ENCODE measurements at regions of chr9 and their contacts with region 1.

Region 1: GRCh38 chr9:136558373-136558772 is 12.5 kb upstream of the NOTCH1 start:
- DNase-seq: peak; percentile 65
- H3K4me3 Mint-ChIP-seq: no peak overlapping the region
- H3K27ac Mint-ChIP-seq: peak overlapping the region; percentile 2
- H3K4me1 Mint-ChIP-seq: peaks cover 11% of the 10 kb centered on the region
- H3K27me3 Mint-ChIP-seq: no peaks in the 10 kb centered on the region
- CTCF ChIP-seq: no peak

Region 2: GRCh38 chr9:136545966-136546698 is 12.2 kb before region 1 on chr9 and contains the start of gene NOTCH1:
- CTCF ChIA-PET with region 1: interaction called, 5 read pairs
- POLR2A ChIA-PET with region 1: interaction called, 30 read pairs
- intact Hi-C with region 1: no loop called
- DNase-seq: peak; percentile 94
- H3K4me3 Mint-ChIP-seq: peak within 1 kb of the TSS; percentile 76
- H3K27ac Mint-ChIP-seq: peak within 1 kb of the TSS; percentile 59
- H3K4me1 Mint-ChIP-seq: peaks cover 10% of the 10 kb centered on the region
- H3K27me3 Mint-ChIP-seq: no peaks in the 10 kb centered on the region
- CTCF ChIP-seq: no peak
- total RNA-seq, gene NOTCH1: 37.5 and 53.4 TPM in 2 replicates

Region 3: DNA sequence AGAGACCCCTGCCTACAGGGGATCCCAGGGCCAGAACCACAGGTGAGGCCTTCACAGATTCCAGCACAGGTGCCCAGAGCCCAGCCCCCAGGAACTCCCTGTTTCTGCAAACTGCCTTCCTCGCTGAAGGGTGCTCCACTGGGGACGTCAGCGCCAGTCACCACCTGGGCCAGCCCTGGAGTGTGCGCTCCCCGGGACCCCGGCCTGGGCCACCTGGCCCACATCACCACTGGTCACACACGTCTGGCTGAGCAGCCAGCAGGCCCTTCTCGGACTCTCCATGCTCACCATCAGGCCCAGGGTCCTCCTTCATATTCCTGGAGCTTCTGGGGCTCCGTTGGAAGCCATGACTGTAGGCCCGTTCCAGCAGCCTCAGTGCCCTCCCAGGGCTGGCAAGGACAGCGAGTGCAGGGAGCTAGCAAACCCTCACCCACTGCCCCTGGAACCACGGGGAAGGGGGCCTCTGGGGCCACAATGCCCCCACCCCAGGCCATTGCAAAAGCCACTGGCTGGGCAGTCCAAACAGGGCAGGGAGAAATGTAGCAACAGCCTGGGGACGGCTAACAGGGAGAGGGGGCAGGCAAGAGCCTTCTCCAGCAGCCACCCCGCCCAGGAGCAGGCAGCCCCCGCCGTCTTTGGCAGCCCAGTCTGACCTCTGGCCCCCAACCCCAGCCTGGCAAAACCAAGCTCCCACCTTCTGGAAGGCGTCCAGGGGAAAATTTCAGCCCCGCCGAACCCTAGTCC is 127.6 kb after region 1 on chr9:
- CTCF ChIA-PET with region 1: no interaction called
- POLR2A ChIA-PET with region 1: no interaction called
- intact Hi-C with region 1: no loop called
- DNase-seq: no peak
- H3K4me3 Mint-ChIP-seq: peak overlapping the region; percentile 68
- H3K27ac Mint-ChIP-seq: no peak overlapping the region
- H3K4me1 Mint-ChIP-seq: peaks cover 2% of the 10 kb centered on the region
- H3K27me3 Mint-ChIP-seq: no peaks in the 10 kb centered on the region
- CTCF ChIP-seq: no peak

Measured in MCF 10A (cell line).